Activated CD4-positive, alpha-beta memory T cell treated with anti-CD3 and anti-CD28 coated beads, Interleukin-2, amount 10 ng/mL, durations not matched to agents 7 days and 5 days (primary cell): ENCODE measurements at regions of chr3 and their contacts with region 1.

Region 1: GRCh38 chr3:196867507-196868296 is at the start of gene SENP5:
- DNase-seq: peak; percentile 93
- H3K4me3 Mint-ChIP-seq: peak within 1 kb of the TSS; percentile 93
- H3K27ac Mint-ChIP-seq: peak within 1 kb of the TSS; percentile 91
- H3K4me1 Mint-ChIP-seq: peaks cover 24% of the 10 kb centered on the region
- H3K27me3 Mint-ChIP-seq: no peaks in the 10 kb centered on the region
- total RNA-seq, gene SENP5: 37.9 to 42.3 TPM

Region 2: GRCh38 chr3:196711838-196712513 is 155.7 kb before region 1 on chr3 and contains the starts of genes CEP19 and PIGX:
- CTCF ChIA-PET with region 1: no interaction called
- POLR2A ChIA-PET with region 1: interaction called, 10 read pairs
- DNase-seq: peak; percentile 91
- H3K4me3 Mint-ChIP-seq: peak within 1 kb of the TSS; percentile 82
- H3K27ac Mint-ChIP-seq: peak within 1 kb of the TSS; percentile 96
- H3K4me1 Mint-ChIP-seq: peaks cover 43% of the 10 kb centered on the region
- H3K27me3 Mint-ChIP-seq: no peaks in the 10 kb centered on the region
- total RNA-seq, gene CEP19: 5.3 to 5.5 TPM
- total RNA-seq, gene PIGX: 47.2 to 50.0 TPM

Region 3: DNA sequence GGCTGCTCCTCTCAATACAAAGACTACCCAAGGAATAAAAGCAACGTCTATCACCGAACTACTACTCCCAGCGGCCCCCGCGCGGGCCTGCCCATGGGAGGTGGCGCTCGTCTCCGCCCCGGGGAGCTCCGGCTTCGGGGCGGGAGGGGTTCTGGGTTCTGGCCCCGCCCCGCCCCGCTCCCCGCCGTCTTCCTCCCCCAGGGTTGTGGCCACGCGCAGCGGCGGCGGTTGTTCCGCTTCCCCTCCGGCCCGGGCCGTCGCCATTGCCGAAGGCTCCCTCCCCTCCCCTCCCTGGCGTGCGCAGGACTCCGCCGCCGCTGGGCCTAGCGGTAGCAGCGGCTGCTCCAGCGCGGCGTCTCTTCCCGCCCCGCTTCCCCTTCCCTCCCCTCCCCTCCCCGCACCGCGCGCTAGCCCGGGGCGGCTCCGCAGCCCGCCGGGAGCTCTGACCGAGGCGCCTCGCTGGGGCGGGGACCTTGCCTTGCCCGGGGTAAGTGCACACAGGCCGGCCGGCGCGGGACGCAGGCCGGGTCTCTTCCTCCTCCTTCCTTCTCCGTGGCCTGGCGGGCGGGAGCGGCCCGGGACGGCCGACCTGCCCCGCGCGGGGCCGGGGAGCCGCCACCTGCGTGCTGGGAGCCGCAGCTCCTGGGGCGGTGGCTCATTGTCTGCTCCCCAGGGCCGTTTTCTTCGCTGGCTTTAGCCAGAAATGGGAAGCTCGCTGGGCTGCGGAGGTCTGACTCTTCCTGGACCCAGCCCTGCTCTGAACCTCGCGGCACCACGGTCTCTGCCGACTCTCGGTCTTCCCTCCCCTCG is 127.8 kb before region 1 on chr3 and contains the start of gene PAK2:
- CTCF ChIA-PET with region 1: interaction called, 3 read pairs
- POLR2A ChIA-PET with region 1: interaction called, 20 read pairs
- DNase-seq: peak; percentile 91
- H3K4me3 Mint-ChIP-seq: peak within 1 kb of the TSS; percentile 99
- H3K27ac Mint-ChIP-seq: peak within 1 kb of the TSS; percentile 98
- H3K4me1 Mint-ChIP-seq: peaks cover 28% of the 10 kb centered on the region
- H3K27me3 Mint-ChIP-seq: no peaks in the 10 kb centered on the region
- total RNA-seq, gene PAK2: 118 to 119 TPM

Region 4: GRCh38 chr3:196774191-196774820 is 93.4 kb before region 1 on chr3:
- CTCF ChIA-PET with region 1: no interaction called
- POLR2A ChIA-PET with region 1: no interaction called
- DNase-seq: no peak
- H3K4me3 Mint-ChIP-seq: no peak overlapping the region
- H3K27ac Mint-ChIP-seq: peak overlapping the region; percentile 61
- H3K4me1 Mint-ChIP-seq: peaks cover 50% of the 10 kb centered on the region
- H3K27me3 Mint-ChIP-seq: no peaks in the 10 kb centered on the region

Region 5: GRCh38 chr3:196803891-196804468 is 63.7 kb before region 1 on chr3:
- CTCF ChIA-PET with region 1: no interaction called
- POLR2A ChIA-PET with region 1: no interaction called
- DNase-seq: no peak
- H3K4me3 Mint-ChIP-seq: no peak overlapping the region
- H3K27ac Mint-ChIP-seq: peak overlapping the region; percentile 67
- H3K4me1 Mint-ChIP-seq: peaks cover 22% of the 10 kb centered on the region
- H3K27me3 Mint-ChIP-seq: no peaks in the 10 kb centered on the region

Region 6: GRCh38 chr3:196969660-196970546 is 102.2 kb after region 1 on chr3:
- CTCF ChIA-PET with region 1: no interaction called
- POLR2A ChIA-PET with region 1: interaction called, 10 read pairs
- DNase-seq: peak; percentile 73
- H3K4me3 Mint-ChIP-seq: peak overlapping the region; percentile 58
- H3K27ac Mint-ChIP-seq: peak overlapping the region; percentile 49
- H3K4me1 Mint-ChIP-seq: peaks cover 12% of the 10 kb centered on the region
- H3K27me3 Mint-ChIP-seq: peaks cover 11% of the 10 kb centered on the region

Region 7: GRCh38 chr3:197083486-197083885 is 215.8 kb after region 1 on chr3:
- CTCF ChIA-PET with region 1: no interaction called
- POLR2A ChIA-PET with region 1: no interaction called
- DNase-seq: no peak
- H3K4me3 Mint-ChIP-seq: no peak overlapping the region
- H3K27ac Mint-ChIP-seq: no peak overlapping the region
- H3K4me1 Mint-ChIP-seq: peaks cover 2% of the 10 kb centered on the region
- H3K27me3 Mint-ChIP-seq: no peaks in the 10 kb centered on the region